Breast epithelium (tissue), 4 donors: ENCODE measurements at regions of chr1 and their contacts with region 1.

Region 1: GRCh38 chr1:47545912-47546483 is 108.2 kb downstream of the FOXD2 start:
- DNase-seq: no peak
- H3K4me3 ChIP-seq: no peak overlapping the region
- H3K27ac ChIP-seq: no peak overlapping the region
- H3K4me1 ChIP-seq: no peaks in the 10 kb centered on the region
- H3K27me3 ChIP-seq: no peaks in the 10 kb centered on the region
- CTCF ChIP-seq: no peak
- POLR2A ChIP-seq: no peak

Region 2: DNA sequence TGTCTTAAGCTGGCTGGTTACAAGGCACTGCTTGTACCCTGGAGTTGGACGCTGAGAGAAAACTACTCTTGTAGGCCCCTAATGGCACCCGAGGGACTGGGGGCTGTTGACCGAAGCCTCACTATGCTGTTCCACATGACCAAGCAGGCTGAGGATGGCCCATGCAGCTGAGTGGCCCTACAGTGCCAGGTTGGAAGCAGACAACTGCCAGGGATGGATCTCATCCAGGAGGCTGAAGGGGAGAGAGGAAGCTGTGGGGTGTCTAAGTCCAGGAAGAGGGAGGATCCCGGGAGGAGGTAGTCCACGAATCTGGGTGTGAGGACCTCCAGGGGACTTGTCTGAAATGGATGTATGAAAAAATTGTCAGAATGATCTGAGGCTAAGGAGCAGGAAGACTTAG is 62.3 kb before region 1 on chr1:
- intact Hi-C with region 1: loop called (anchors 2 kb)
- DNase-seq: no peak
- H3K4me3 ChIP-seq: no peak overlapping the region
- H3K27ac ChIP-seq: no peak overlapping the region
- H3K4me1 ChIP-seq: no peaks in the 10 kb centered on the region
- H3K27me3 ChIP-seq: no peaks in the 10 kb centered on the region
- CTCF ChIP-seq: no peak
- POLR2A ChIP-seq: no peak